ENCODE measurements at regions of chr17 and their contacts with region 1.

Region 1: DNA sequence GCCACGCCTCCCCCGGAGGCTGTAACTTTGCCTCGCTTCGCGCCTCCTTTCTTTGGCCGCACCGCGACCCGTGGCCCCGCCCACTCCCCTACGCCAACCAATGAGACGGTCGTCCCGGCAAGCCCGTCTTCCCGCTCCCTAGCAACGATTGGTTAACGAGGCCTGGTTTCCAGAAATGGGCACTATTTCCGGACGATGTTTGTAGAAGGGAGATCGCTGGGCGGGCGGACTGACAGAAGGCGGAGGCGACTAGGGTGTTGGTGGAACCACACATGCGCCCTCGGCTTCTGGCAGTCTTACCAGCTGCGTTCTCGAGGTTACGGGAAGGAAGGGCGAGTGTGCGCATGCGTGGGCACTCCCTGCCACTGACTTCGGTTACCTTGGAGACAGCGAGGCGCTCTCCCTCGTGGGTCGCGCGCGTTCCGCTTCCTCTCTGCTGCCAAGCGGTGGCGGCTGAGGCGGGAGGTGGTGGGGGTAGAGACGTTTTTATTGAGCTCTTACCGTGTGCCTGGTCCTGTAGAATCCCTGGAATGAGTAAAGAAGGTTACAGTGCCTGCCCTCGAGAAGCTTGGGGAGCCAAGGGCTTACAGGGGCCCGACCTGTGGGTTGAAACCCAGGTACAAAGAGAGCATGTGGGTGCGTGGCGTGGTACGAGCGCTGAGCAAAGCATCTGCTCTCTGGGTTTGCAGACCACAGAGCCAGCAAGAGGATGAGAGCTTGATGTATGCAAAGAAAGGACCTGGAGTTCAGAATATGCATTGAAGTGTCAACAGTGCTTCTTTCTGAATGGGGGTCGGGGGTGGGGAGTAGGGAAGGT is 500 bp upstream of the MAP3K14 start:
- H3K4me3 ChIP-seq: peak overlapping the region; percentile 23
- H3K27ac ChIP-seq: peak overlapping the region; percentile 75
- H3K4me1 ChIP-seq: peaks cover 52% of the 10 kb centered on the region
- CTCF ChIP-seq: peak; percentile 37; the same call in 1 of the 2 replicates

Region 2: DNA sequence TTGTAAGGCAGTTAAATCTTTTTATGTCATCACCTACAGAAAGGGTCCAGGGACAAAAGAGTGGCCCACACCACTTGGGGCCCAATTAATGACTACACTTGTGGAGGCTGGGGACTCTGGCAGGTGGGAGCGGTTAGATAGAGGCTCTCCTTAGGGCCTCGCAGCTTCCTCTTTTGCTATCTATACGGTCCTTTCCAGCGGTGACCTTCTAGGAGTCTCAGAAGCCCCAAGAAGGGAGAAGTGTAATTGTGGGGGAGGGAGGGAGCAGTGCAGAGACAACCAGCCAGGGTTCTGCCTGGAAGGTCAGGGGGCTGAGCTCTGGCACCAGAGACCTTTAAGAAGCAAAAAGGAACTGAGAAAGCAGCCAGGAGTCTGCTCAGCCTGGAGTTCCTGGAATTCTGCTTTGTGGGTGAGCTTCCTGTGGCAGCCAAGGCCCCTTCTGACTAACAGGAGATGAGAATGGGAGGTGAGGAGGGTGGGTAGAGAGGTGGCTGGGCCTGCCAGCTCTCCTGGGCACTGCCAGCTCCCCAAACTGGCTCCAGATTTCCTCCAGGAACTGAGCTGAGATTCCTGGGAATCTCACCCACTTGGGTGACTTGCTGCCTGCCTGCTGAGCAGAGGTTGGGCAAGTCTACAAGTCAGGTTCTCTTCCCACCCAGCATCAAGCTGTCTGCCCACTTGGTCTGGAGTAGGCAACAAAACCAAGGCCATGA is 15.8 kb after region 1 on chr17:
- CTCF ChIA-PET with region 1: interaction called, 3 read pairs
- POLR2A ChIA-PET with region 1: interaction called, 10 read pairs
- H3K4me3 ChIP-seq: no peak overlapping the region
- H3K27ac ChIP-seq: no peak overlapping the region
- H3K4me1 ChIP-seq: peaks cover 18% of the 10 kb centered on the region
- CTCF ChIP-seq: no peak

Region 3: DNA sequence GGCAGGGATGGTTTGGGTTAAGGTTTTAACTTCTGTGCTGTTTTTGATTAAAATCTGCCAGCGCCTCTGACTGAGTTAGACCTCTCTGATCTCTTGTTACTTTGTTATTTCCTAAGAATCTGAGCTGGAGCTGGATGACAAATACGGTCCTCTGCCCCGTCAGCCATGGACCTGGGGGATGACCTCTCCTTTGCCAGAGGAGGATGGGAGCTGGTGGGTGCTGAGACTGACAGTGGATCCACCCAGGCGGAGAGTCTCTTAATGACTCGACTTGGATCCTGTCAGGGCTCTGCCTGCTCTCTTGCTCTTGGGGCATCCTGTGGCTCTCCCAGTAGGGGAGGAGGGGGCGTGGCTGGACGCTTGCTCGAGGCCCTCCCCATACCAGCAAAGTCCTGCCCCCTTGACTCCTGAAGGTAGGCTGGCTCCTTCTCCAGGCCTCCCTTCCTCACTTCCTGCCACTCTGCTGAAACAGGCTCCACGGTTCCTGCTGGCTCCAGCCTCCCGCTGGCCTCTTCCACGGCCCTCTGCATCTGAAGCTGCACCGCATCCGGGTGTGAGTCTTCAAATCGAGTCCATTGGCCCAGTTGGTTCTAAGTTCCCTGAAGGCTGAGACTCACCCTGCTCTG is 24.3 kb after region 1 on chr17:
- CTCF ChIA-PET with region 1: interaction called, 7 read pairs
- POLR2A ChIA-PET with region 1: interaction called, 20 read pairs
- H3K4me3 ChIP-seq: no peak overlapping the region
- H3K27ac ChIP-seq: peak overlapping the region; percentile 53; the same call in 1 of the 2 replicates
- H3K4me1 ChIP-seq: peaks cover 26% of the 10 kb centered on the region
- CTCF ChIP-seq: no peak

Region 4: GRCh38 chr17:45371414-45372327 is 54.4 kb after region 1 on chr17:
- CTCF ChIA-PET with region 1: interaction called, 26 read pairs
- POLR2A ChIA-PET with region 1: interaction called, 32 read pairs
- H3K4me3 ChIP-seq: peak overlapping the region; percentile 21
- H3K27ac ChIP-seq: peak overlapping the region; percentile 55
- H3K4me1 ChIP-seq: 0 out of 2 replicates have a peak, but pooled peaks cover 7% of the 10 kb centered on the region
- CTCF ChIP-seq: peak; percentile 58; the same call in 1 of the 2 replicates